Activated naive CD4-positive, alpha-beta T cell treated with anti-CD3 and anti-CD28 coated beads for 36 hours (primary cell): ENCODE measurements at regions of chrX and their contacts with region 1.

Region 1: DNA sequence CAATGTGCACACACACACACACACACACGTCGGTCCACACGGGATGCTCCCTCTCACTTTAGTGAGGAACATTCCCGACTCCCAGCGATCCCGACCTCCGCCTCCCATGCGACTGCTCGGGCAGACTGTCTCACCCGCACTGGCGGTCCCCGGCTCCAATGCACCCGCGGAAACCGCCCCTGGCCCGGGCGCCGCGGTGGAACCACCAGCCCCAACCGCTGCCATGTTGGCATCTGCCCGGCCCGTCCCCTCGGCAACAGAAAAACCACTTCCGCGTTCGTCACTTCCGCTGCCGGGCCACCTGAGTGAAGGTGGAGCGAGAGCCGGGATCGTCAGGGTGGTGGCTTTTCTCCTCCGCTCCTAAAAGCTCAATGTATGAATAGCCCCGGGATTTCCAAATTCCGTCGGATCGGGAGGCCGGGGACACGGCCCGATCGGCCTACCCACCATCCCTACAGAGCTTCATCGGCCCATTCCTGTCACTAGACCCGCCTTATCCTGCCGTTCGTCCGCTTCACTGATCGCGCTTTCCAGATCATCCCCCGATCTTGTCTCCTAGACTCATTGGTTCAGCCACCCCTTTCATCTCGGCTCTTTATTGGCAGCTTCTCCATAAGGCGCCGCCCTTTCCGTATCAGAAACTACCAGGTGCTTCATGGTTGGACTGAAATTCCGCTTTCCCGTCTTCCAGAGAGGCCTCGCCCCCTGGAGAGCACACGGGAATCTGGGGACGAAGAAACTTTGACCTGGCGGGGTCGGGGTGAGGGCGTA is at the start of gene SLC35A2:
- DNase-seq: peak; percentile 92
- H3K4me3 Mint-ChIP-seq: peak within 1 kb of the TSS; percentile 95
- H3K27ac Mint-ChIP-seq: peak within 1 kb of the TSS; percentile 99
- H3K4me1 Mint-ChIP-seq: peaks cover 34% of the 10 kb centered on the region
- H3K27me3 Mint-ChIP-seq: peaks cover 9% of the 10 kb centered on the region
- total RNA-seq, gene SLC35A2: 23.9 to 26.7 TPM

Region 2: DNA sequence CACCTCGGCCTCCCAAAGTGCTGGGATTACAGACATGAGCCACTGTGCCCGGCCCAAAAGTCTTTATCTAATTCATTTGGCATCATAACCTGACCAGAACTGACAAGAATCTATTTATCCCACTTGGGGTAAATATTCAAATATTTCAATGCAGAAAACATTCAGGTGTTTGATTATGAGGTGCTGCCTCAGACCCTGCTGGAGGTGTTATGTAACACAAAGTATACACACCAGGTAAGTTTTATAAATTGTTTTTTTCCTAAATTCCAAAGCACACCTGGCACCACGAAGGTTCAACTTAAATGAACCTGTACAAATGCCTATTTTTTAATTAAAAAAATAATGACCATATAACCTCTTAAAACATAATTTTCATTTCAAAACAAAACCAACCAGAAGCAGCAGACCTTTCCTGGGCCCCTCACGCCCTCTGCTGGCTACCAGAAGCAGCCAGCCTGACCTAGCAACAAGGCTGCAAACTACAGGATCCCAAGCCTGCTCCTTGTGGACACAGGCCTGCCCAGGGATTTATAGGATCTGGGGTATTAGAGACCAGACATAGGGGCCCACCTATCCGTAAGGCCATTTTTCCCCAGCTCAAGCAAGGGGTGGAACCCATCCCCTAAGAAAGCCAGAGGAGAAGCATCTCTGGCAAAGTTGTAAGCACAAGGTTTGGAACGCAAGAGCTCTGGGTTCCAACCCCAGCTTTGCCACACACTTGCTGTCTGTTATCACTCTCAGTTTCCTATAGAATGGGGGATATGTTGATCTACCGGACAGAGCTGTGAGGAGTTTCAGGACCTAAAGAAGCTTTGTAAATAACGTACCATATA is 34.1 kb after region 1 on chrX:
- CTCF ChIA-PET with region 1: interaction called, 7 read pairs
- intact Hi-C with region 1: loop called (anchors 5 kb)
- DNase-seq: peak; percentile 70
- H3K4me3 Mint-ChIP-seq: no peak overlapping the region
- H3K27ac Mint-ChIP-seq: peak overlapping the region; percentile 83
- H3K4me1 Mint-ChIP-seq: peaks cover 53% of the 10 kb centered on the region
- H3K27me3 Mint-ChIP-seq: no peaks in the 10 kb centered on the region

Region 3: DNA sequence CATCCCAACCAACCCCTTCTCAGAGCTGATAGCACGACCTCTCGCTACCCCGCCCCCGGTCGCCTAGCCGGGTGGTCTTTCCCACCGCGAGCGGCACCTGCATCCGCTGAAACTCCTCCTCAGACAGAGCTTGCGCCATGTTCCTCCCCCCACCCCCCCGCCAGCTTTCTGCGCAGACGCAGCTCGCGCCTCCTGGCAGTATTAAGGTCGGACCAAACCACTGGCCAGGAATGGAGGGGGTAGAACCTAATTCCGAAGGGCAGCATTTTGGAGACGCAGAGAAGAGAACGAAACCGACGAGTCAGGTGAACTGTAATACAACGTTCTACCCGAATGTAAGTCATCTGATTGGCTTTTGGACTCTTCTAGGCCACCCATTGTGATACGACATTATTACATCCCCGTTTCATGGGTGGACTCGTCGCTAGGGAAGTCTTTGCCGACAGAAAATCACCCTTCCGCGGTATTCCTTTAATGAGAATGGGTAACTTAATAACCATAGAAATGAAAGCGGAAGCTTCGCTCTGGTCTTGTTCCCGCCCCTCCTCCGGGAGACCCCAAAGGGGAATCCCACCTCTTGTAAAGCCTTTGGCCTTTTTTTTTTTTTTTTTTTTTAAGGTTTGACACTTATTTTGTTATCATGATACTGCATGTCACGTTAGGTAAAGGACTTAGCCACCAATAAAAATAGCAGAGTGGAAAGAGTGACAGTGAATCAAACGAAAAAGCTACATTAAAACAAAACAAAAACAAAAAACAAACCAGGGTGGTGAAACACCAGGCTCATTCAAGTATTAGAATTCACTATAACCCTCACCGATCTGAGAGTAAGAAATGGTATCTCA is 90.7 kb after region 1 on chrX and contains the start of gene GRIPAP1:
- CTCF ChIA-PET with region 1: interaction called, 3 read pairs
- intact Hi-C with region 1: loop called (anchors 5 kb)
- DNase-seq: peak; percentile 85
- H3K4me3 Mint-ChIP-seq: peak within 1 kb of the TSS; percentile 99
- H3K27ac Mint-ChIP-seq: peak within 1 kb of the TSS; percentile 97
- H3K4me1 Mint-ChIP-seq: peaks cover 37% of the 10 kb centered on the region
- H3K27me3 Mint-ChIP-seq: no peaks in the 10 kb centered on the region
- total RNA-seq, gene GRIPAP1: 64.8 to 73.1 TPM